HEK293 (cell line): ENCODE measurements at regions of chr1 and their contacts with region 1.

Region 1: DNA sequence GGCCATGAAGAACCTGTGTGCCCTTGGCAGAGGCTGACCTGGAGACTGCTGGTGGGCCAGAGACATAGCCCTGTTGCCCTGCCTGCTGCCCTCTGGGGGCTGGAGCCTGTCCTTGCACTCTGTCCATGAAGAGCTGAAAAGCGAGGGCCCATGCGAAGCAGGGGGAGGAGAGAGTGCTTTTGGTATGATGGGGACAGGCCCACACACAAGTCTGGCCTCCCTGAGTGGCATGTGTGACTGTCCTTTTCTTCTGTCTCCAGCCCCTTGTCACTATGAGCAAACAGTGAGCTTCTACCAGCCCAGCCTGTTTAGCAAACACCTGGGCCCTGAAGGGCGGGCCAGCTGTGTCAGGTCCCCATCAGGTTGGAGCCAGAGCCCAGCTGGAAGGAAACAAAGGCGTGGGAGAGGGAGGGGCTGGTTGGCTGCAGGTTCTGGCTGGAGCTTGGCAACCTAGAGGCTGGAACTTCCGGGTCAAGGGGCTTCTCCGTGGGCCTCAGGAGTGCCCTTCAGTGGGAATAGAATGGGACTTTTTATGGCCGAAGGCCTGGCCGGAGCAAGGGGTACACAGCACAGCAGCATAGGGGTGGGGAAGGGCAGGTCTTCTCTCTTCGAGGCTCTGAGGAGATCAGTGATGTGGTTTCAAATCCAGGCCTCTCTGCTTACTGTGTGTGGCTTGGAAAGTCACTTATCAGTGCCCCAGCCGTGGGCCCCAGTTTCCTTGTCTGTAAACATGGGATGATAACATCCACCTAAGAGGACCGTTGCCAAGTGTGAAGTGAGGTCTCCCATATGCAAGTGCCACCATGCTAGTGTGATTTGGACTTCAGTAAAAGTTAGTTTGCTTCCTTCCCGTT is 14.3 kb downstream of the QSOX1 start:
- H3K4me3 ChIP-seq: no peak overlapping the region
- H3K27ac ChIP-seq: no peak overlapping the region
- H3K4me1 ChIP-seq: peaks cover 11% of the 10 kb centered on the region
- CTCF ChIP-seq: peak; percentile 49; the same call in 1 of the 2 replicates

Region 2: DNA sequence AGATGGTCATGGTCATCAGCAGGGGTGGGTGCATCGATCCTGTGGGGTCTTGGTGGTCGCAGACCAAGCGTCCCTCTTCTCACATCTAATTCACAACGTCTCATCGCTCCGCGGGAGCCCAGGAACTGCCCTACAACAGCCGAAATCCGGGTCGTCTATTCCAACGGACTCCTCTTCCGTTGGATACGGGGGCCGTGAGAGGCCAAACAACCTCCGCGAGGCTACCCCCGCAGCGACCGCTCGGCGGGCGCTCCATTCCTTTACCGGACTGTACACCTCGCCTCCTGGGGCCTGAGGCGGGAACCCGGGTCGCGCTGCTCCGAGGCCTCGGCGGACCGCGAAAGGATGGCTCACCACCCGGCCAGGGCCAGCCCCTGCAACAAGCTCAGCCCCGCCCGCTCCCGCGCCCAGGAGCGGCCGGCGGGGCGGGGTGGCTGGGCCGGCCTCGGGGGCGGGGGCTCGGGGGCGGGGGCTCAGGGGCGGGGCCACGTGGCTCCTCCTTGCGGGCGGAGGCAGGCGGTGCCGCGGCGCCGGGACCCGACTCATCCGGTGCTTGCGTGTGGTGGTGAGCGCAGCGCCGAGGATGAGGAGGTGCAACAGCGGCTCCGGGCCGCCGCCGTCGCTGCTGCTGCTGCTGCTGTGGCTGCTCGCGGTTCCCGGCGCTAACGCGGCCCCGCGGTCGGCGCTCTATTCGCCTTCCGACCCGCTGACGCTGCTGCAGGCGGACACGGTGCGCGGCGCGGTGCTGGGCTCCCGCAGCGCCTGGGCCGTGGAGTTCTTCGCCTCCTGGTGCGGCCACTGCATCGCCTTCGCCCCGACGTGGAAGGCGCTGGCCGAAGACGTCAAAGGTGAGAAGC is 14.5 kb before region 1 on chr1 and contains the start of gene QSOX1:
- CTCF ChIA-PET with region 1: interaction called, 37 read pairs
- POLR2A ChIA-PET with region 1: interaction called, 27 read pairs
- H3K4me3 ChIP-seq: peak within 1 kb of the TSS; percentile 73
- H3K27ac ChIP-seq: peak within 1 kb of the TSS; percentile 65; the same call in 1 of the 2 replicates
- H3K4me1 ChIP-seq: peaks cover 11% of the 10 kb centered on the region
- CTCF ChIP-seq: no peak